Thyroid gland (tissue), 4 donors: ENCODE measurements at regions of chr6 and their contacts with region 1.

Region 1: DNA sequence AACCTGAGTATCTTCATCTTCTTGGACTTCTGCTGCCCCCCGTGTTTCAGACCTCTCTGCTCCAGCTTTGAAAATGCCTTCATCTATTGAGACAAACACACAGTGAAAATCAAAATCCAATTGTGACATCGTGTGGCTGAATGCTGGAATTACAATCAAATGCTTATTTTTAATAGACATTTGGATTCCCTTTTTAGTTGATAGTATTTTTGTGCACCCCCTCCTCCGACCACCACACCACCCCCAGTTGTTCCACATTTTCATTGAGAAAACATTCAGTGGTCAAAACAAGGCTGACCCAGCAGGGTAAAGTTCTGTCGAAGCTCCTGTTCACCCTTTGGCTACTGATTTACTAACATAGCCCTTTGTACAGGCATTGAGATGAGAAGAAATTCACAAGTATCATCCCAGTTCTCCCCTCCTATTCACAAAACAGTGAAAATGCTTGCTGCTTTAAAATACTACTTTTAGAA is 79.0 kb downstream of the NRSN1 start:
- DNase-seq: peak; percentile 13 to 15
- H3K4me3 ChIP-seq: no peak overlapping the region
- H3K27ac ChIP-seq: no peak overlapping the region
- H3K4me1 ChIP-seq: no peaks in the 10 kb centered on the region
- H3K27me3 ChIP-seq: no peaks in the 10 kb centered on the region
- CTCF ChIP-seq: peak; percentile 32 to 82 (median 52)
- POLR2A ChIP-seq: no peak

Region 2: DNA sequence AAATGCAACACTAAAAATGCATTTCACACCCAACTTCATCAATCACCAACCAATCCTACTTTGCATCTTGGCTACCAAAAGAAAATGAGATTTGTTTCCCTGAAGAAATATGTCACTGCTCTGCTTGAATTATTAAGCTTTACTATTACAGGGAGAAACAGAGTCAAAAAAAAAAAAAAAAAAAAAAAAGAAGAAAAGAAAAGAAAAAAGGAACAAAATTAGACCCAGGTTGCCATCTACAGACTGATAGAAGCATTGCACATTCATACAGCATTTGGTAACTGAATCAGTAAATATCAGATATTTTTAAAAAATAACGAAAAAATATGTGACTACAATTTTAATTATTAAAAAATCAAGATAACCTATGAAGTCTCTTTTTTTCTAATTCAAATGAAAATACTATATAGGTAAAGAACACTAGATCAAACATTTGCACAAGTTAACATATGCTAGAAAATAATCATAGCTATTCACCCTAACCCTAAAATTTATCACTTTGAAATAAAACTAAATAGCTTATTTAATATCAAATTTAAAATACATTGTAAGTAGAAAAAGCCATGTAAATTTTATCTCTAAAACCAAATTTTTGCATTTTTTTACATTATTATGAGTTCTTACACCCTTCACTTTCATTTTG is 69.5 kb after region 1 on chr6:
- intact Hi-C with region 1: loop called (anchors 10 kb)
- DNase-seq: no peak
- H3K4me3 ChIP-seq: no peak overlapping the region
- H3K27ac ChIP-seq: peak overlapping the region in 1 of 3 donors; percentile 72
- H3K4me1 ChIP-seq: peaks cover 19 to 25% of the 10 kb centered on the region in 2 donors
- H3K27me3 ChIP-seq: no peaks in the 10 kb centered on the region
- CTCF ChIP-seq: peak; percentile 18 to 97 (median 42)
- POLR2A ChIP-seq: no peak